ENCODE measurements at regions of chr10 and their contacts with region 1.

Region 1: GRCh38 chr10:90787393-90788198 is 70.2 kb downstream of the HTR7 start:
- DNase-seq: no peak
- H3K4me3 ChIP-seq: no peak overlapping the region
- H3K27me3 ChIP-seq: peaks cover 3% of the 10 kb centered on the region
- CTCF ChIP-seq: peak; percentile 88

Region 2: DNA sequence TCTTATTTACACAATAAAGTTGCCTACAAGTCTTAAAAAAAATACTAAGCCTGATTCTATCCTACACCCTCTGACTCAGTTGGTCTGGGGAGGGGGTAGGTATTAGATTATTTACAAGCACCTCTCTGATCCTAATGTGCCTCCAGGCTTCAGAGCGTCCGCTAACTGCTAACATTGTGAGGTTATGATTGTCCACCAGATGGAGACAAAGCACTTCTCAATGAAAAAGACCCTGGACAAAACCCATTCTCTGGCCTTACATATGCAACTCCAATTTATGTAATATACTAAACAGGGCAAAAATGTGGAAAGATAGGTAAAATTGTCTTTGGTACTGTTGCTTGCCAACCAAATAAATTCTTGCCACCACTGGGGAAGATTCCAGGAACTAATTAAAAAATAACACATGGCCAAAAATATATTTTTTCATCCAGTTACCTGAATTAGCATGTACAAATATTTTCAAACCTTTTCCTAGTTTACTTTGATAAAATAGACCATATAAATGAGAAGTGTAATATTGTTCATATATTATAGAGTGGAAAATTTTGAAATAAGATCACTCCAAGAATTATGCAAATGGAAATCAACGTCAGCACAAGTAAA is 993.8 kb before region 1 on chr10:
- CTCF ChIA-PET with region 1: interaction called, 26 read pairs
- POLR2A ChIA-PET with region 1: no interaction called
- DNase-seq: peak; percentile 15
- H3K4me3 ChIP-seq: no peak overlapping the region
- H3K27me3 ChIP-seq: no peaks in the 10 kb centered on the region
- CTCF ChIP-seq: peak; percentile 76

Region 3: GRCh38 chr10:90751107-90751997 is 36.2 kb before region 1 on chr10:
- CTCF ChIA-PET with region 1: interaction called, 23 read pairs
- POLR2A ChIA-PET with region 1: no interaction called
- DNase-seq: no peak
- H3K4me3 ChIP-seq: no peak overlapping the region
- H3K27me3 ChIP-seq: peaks cover 2% of the 10 kb centered on the region; the same call in 1 of the 2 replicates
- CTCF ChIP-seq: peak; percentile 75

Region 4: DNA sequence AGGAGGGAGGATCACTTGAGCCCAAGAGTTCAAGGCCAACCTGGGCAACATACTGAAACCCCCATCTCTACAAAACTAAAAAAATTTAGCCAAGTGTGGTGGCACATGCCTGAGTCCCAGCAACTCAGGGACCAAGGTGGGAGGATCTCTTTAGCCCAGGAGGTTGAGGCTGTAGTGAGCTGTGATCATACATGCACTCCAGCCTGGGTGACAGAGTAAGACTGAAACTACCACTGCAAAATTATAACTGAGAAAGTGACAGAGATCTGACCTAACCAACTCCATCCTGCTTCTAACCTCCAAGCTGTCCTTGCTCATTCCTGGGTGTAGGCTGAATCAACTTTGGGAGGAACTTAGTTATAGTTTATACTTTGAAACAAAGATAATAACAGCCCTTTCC is 10.9 kb after region 1 on chr10:
- CTCF ChIA-PET with region 1: interaction called, 14 read pairs
- POLR2A ChIA-PET with region 1: no interaction called
- DNase-seq: no peak
- H3K4me3 ChIP-seq: no peak overlapping the region
- H3K27me3 ChIP-seq: no peaks in the 10 kb centered on the region
- CTCF ChIP-seq: no peak

Measured in BJ (cell line).